ENCODE measurements at regions of chr10 and their contacts with region 1.

Region 1: DNA sequence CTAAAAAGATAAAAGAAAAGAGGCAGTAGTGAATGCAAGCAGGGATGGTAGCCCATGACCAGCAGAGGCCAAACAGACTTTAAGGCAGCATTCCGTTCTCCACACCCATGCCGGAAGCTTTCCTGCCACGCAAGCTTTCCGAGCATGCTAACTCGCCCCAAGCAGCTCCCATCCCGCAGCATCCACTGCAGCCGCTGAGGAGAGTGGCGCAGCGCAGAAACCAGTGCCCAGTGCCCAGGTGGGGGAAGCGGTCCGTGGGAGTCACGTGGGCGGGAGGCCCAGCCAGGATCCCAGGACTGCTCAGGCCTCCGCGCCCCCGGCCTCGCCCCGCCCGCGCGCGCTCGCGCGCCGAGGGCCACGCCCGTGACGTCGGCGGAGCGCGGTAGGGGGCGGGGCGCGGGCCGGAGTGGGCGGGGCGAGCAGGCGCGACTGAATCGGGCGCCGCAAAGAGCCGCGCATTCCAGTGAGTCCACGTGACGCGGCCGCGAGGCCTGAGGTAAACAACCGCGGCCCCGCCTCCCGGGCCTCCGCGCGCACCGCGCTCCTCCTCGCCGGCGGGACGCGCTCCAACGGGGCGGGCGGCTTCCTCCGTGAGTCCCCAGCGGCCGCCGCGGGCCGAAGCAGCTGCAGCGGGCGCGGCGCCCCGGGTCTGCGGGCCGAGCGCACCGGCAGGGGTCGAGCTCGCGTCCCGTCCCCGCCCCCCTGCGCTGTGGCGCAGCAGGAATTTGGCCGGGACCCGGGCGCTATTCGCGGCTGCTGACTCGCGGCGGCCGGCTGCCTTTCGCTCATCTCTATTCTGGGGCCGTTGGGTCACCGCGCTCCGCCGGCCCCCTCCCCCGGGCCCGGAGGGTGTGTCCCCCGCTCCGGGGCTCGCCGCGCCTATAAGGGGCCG is at the start of gene OTUD1:
- DNase-seq: peak; percentile 98
- H3K4me3 ChIP-seq: peak within 1 kb of the TSS; percentile 77 to 98 (median 84)
- H3K27ac ChIP-seq: peak within 1 kb of the TSS; percentile 96 to 99 (median 96)
- H3K4me1 ChIP-seq: peaks cover 0 to 34% (median 30%) of the 10 kb centered on the region in 4 donors
- H3K27me3 ChIP-seq: no peaks in the 10 kb centered on the region
- CTCF ChIP-seq: peak in 2 of 4 experiments; percentile 40 to 44
- EP300 ChIP-seq: peak in 1 of 4 donors; percentile 51
- POLR2A ChIP-seq: no peak
- total RNA-seq, gene OTUD1: 8.8 to 15.5 (median 12.4) TPM

Region 2: GRCh38 chr10:21533467-21534279 is 1905.1 kb before region 1 on chr10 and contains the start of gene MLLT10:
- intact Hi-C with region 1: loop called (anchors 10 kb)
- DNase-seq: peak; percentile 97
- H3K4me3 ChIP-seq: peak within 1 kb of the TSS; percentile 66 to 93 (median 92)
- H3K27ac ChIP-seq: peak within 1 kb of the TSS; percentile 95 to 99 (median 97)
- H3K4me1 ChIP-seq: peaks cover 0 to 56% (median 26%) of the 10 kb centered on the region in 4 donors
- H3K27me3 ChIP-seq: no peaks in the 10 kb centered on the region
- CTCF ChIP-seq: peak in 3 of 4 experiments; percentile 38 to 69 (median 55)
- EP300 ChIP-seq: no peak
- POLR2A ChIP-seq: peak; percentile 59 to 76
- total RNA-seq, gene MLLT10: 36.0 to 53.7 (median 45.1) TPM

Region 3: DNA sequence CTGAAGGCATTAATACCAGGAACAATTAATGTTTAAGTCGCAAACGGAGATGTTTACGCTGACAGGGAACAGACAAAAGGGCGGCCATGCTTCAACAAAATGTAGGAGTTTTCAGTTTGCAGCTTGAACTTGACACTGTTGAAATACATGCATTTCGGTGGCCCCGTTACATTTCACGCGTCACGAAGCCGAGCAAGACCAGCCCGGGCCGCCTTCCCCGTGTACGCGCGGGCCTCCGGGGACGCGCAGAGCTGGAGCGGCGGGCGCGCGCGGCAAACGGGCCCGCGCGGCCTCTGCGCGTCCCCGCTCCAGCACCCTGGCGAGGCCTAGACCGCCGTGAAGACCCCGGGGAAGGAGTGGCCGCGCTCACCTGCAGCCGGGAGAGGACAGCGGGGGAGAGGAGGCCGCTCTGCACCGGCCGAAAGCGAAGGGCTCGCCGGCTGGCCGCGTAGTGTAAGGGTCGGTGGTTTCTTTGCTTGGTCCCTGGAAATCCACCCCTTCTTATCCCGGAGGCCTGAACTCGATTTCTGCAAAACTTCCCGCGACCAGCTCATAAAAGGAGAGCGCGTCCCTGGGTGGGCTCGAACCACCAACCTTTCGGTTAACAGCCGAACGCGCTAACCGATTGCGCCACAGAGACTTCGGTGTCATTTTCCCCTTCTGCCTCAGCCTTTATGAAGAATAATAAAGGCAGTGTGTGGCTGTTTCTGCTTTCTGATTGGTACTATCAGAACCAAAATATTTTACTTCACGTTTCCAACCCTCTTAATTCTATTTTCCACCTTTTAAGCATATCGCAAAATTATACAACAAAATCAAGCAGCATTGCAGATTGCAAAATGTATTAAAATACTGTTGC is 1209.6 kb before region 1 on chr10:
- intact Hi-C with region 1: loop called (anchors 2 kb)
- DNase-seq: peak; percentile 93
- H3K4me3 ChIP-seq: peak overlapping the region; percentile 60 to 79 (median 75)
- H3K27ac ChIP-seq: peak overlapping the region; percentile 93 to 96 (median 96)
- H3K4me1 ChIP-seq: peaks cover 0 to 12% (median 7%) of the 10 kb centered on the region in 4 donors
- H3K27me3 ChIP-seq: no peaks in the 10 kb centered on the region
- CTCF ChIP-seq: no peak
- EP300 ChIP-seq: no peak
- POLR2A ChIP-seq: no peak

Region 4: DNA sequence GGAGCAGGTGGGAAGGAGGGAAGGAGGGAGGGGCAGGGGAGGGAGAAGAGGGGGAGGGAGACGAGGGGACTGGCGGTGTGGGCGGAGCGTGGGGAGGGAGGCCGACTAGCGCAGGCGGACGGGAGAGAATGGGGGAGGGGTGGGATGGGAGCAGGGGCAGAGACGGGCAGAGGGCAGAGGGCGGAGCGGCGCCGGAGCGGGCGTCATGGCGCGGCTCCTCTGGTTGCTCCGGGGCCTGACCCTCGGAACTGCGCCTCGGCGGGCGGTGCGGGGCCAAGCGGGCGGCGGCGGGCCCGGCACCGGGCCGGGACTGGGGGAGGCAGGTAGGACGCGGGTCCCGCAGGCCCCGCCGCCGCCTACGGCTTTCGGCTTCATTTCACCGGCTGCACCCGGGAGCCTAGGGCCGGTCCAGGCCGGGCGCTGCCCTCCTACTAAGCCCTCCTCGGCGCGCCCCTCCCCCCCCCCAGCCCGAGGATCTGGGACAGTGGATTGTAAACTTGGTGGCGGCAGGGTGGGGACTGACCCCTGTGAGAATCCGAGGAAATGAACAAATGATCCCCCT is 343.3 kb before region 1 on chr10 and contains the start of gene MSRB2:
- intact Hi-C with region 1: loop called (anchors 5 kb)
- DNase-seq: peak; percentile 98
- H3K4me3 ChIP-seq: peak within 1 kb of the TSS; percentile 62 to 95 (median 79)
- H3K27ac ChIP-seq: peak within 1 kb of the TSS; percentile 90 to 99 (median 96)
- H3K4me1 ChIP-seq: peaks cover 0 to 17% (median 12%) of the 10 kb centered on the region in 4 donors
- H3K27me3 ChIP-seq: no peaks in the 10 kb centered on the region
- CTCF ChIP-seq: no peak
- EP300 ChIP-seq: no peak
- POLR2A ChIP-seq: peak; percentile 45 to 55
- total RNA-seq, gene MSRB2: 32.7 to 56.3 (median 47.0) TPM

Region 5: DNA sequence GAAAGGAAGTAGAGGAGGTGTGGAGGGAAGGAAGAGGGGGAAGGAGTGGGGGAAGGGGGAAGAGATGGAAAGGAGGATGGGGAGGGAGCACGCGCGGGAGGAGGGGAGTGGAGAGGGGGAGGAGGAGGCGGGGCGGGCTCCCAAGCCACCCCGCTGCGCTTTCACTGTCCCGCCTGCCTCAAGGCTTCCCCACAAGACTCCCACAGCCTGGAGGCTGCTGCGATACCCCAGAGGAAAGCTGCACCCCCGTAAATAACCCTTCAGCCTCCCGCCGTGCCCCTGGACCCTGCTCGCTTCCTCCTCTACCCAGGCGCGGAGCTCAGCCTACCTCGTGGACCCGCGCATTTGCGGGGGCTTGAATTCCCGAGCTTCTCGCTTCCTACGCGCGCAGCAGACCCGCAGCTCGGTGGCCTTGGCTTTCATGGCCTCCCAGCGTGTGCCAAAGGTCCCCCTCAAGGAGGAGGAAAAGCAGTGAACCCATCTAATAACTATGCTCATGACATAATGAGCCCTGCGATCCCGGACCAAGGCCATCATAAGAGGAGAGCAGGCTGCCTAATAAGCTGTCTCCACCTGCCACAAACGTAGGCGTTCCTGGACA is 94.5 kb before region 1 on chr10 and contains the start of gene C10orf67:
- intact Hi-C with region 1: loop called (anchors 10 kb)
- DNase-seq: no peak
- H3K4me3 ChIP-seq: peak within 1 kb of the TSS; percentile 23 to 57 (median 50)
- H3K27ac ChIP-seq: peak within 1 kb of the TSS in 3 of 4 donors; percentile 23 to 57 (median 55)
- H3K4me1 ChIP-seq: peaks cover 0 to 25% (median 21%) of the 10 kb centered on the region in 4 donors
- H3K27me3 ChIP-seq: no peaks in the 10 kb centered on the region
- CTCF ChIP-seq: no peak
- EP300 ChIP-seq: no peak
- POLR2A ChIP-seq: no peak
- total RNA-seq, gene C10orf67: not detected

Region 6: GRCh38 chr10:23496727-23497126 is 57.9 kb after region 1 on chr10:
- intact Hi-C with region 1: no loop called
- DNase-seq: no peak
- H3K4me3 ChIP-seq: no peak overlapping the region
- H3K27ac ChIP-seq: no peak overlapping the region
- H3K4me1 ChIP-seq: no peaks in the 10 kb centered on the region
- H3K27me3 ChIP-seq: no peaks in the 10 kb centered on the region
- CTCF ChIP-seq: no peak
- EP300 ChIP-seq: no peak
- POLR2A ChIP-seq: no peak

Region 7: GRCh38 chr10:24718031-24718855 is 1279.4 kb after region 1 on chr10:
- intact Hi-C with region 1: loop called (anchors 10 kb)
- DNase-seq: no peak
- H3K4me3 ChIP-seq: no peak overlapping the region
- H3K27ac ChIP-seq: peak overlapping the region in 2 of 4 donors; percentile 26 to 99
- H3K4me1 ChIP-seq: peaks cover 0 to 71% (median 52%) of the 10 kb centered on the region in 4 donors
- H3K27me3 ChIP-seq: no peaks in the 10 kb centered on the region
- CTCF ChIP-seq: no peak
- EP300 ChIP-seq: no peak
- POLR2A ChIP-seq: no peak

Region 8: GRCh38 chr10:25016376-25017154 is 1577.8 kb after region 1 on chr10 and contains the start of gene THNSL1:
- intact Hi-C with region 1: loop called (anchors 10 kb)
- DNase-seq: peak; percentile 99
- H3K4me3 ChIP-seq: peak within 1 kb of the TSS; percentile 54 to 70 (median 68)
- H3K27ac ChIP-seq: peak within 1 kb of the TSS; percentile 86 to 96 (median 91)
- H3K4me1 ChIP-seq: peaks cover 0 to 16% (median 9%) of the 10 kb centered on the region in 4 donors
- H3K27me3 ChIP-seq: no peaks in the 10 kb centered on the region
- CTCF ChIP-seq: no peak
- EP300 ChIP-seq: peak in 1 of 4 donors; percentile 37
- POLR2A ChIP-seq: peak; percentile 54 to 77
- total RNA-seq, gene THNSL1: 0.36 to 1.9 (median 0.77) TPM